ENCODE measurements at regions of chr2 and their contacts with region 1.

Region 1: GRCh38 chr2:108637304-108637669 is 82.0 kb upstream of the RANBP2 start:
- DNase-seq: peak; percentile 87 to 88
- ATAC-seq: peak; percentile 84
- H3K4me3 ChIP-seq: no peak overlapping the region
- H3K27ac ChIP-seq: peak overlapping the region; percentile 86 to 95 (median 92)
- H3K4me1 ChIP-seq: peaks cover 74 to 88% of the 10 kb centered on the region in 2 donors
- H3K27me3 ChIP-seq: no peaks in the 10 kb centered on the region
- CTCF ChIP-seq: no peak
- POLR2A ChIP-seq: peak; percentile 43 to 69

Region 2: GRCh38 chr2:108594132-108594981 is 42.9 kb before region 1 on chr2:
- in situ Hi-C with region 1: no loop called
- intact Hi-C with region 1: loop called (anchors 2 kb)
- DNase-seq: no peak
- ATAC-seq: peak in 1 of 2 donors; percentile 37
- H3K4me3 ChIP-seq: no peak overlapping the region
- H3K27ac ChIP-seq: peak overlapping the region; percentile 16 to 60 (median 48)
- H3K4me1 ChIP-seq: peaks cover 55 to 59% of the 10 kb centered on the region in 2 donors
- H3K27me3 ChIP-seq: no peaks in the 10 kb centered on the region
- CTCF ChIP-seq: no peak
- POLR2A ChIP-seq: no peak

Region 3: DNA sequence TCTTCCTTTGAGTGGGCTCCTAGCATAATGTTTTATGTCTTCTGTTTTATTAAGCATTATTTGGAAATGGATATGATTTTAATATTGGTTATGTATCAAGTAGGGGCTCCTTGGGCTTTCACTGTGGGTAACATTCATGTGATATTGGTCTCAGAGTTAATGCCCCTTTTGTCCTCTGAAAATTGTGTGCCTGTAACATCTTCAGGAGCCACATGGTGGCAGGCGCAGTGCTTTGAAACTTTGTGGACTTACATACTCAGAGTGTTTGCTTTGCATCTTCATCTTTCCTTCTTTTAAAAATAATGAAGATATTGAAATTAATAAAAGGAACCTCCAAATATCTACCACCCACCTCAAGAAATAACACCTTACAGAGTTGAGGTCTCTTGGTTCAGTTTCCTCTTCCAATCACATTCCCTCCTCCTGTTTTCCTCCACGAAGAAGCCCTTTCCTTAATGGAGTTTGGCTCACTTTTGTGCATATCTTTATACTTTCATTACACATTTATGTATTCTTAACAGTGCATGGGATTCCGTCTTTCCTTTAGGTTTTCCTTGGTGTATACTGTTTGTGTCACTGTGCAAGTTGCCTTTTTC is 29.5 kb before region 1 on chr2:
- in situ Hi-C with region 1: no loop called
- intact Hi-C with region 1: loop called (anchors 1 kb)
- DNase-seq: no peak
- ATAC-seq: peak; percentile 62 to 68
- H3K4me3 ChIP-seq: no peak overlapping the region
- H3K27ac ChIP-seq: peak overlapping the region in 1 of 4 donors; percentile 29
- H3K4me1 ChIP-seq: peaks cover 17 to 43% of the 10 kb centered on the region in 2 donors
- H3K27me3 ChIP-seq: no peaks in the 10 kb centered on the region
- CTCF ChIP-seq: peak; percentile 41 to 65 (median 54)
- POLR2A ChIP-seq: no peak

Region 4: DNA sequence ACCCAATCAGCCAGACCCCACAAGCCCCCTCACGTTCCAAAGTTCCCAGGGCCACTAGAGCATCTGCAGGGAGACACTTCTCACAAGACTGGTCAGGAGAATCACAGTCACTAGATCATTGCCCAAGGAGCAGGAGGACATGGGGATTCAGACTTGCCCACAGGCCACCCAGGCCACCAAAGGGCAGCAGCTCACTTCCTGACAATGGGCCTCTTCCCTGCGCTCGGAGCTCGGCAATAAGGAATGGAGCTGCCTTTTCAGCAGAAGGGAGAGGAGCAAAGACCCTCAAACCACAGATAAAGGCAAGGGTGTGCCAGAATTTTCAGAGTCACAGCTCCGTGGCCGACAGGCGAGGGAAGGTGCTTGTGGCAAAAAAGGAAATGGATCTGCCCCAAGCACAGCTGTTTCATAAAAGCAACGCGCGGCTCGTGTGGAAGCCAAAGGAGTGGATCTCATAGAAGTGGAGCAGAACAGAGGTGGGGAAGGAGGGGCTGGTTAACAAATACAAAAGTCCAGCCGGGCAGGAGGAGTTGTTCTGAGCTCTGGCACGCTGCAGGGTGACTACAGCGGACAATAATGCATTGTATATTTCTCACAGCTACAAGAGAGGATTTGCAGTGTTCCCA is 279.6 kb after region 1 on chr2:
- in situ Hi-C with region 1: no loop called
- intact Hi-C with region 1: no loop called
- DNase-seq: no peak
- ATAC-seq: no peak
- H3K4me3 ChIP-seq: no peak overlapping the region
- H3K27ac ChIP-seq: no peak overlapping the region
- H3K4me1 ChIP-seq: no peaks in the 10 kb centered on the region
- H3K27me3 ChIP-seq: no peaks in the 10 kb centered on the region
- CTCF ChIP-seq: no peak
- POLR2A ChIP-seq: no peak

Measured in gastrocnemius medialis (tissue), 4 donors.